Natural killer cell (primary cell): ENCODE measurements at regions of chr19 and their contacts with region 1.

Region 1: DNA sequence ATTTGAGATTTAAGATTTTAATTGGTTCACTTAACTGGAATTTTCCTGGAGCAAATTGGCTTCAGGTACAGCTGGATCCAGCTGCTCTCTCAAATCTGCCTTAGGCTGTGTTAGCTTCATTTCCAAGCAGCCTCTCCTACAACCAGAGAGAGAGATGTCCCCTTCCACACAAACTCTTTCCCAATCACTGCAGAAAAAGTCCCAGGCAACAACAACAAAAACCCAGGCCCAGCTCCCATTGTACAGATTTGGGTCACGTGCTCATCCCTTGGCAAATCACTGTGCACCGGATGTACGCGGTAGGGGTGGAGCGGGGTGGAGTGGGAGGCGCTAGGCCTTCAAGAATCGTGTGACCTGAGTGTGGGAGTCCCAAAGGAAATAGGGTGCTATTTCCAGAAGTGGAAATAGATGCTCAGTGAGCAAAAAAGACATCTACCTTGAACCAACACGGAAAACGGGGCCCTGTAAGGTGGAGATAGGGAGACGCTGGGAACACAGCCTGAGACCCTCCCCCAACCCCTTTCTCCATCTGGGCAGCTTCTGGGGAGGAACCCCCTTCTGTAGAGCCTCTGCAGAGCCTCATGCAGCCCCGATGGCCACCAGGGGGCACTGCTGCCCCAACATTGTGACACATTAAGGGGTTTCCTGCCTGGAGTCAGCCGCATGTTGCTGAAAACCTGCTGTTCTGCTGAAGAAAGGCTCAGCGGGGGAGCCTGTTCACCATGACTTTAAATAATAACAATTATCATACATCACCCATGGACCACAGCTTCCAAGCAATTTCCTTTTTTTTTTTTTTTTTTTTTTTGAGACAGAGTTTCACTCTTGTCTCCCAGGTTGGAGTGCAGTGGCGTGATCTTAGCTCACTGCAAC is 25.4 kb downstream of the HPN start:
- DNase-seq: peak; percentile 89 to 94
- ATAC-seq: peak; percentile 84 to 94 (median 94)
- H3K4me3 ChIP-seq: no peak overlapping the region
- H3K4me3 Mint-ChIP-seq: no peak overlapping the region
- H3K27ac ChIP-seq: no peak overlapping the region
- H3K27ac Mint-ChIP-seq: no peak overlapping the region
- H3K4me1 ChIP-seq: peaks cover 6% of the 10 kb centered on the region
- H3K4me1 Mint-ChIP-seq: peaks cover 0 to 5% of the 10 kb centered on the region in 2 donors
- H3K27me3 ChIP-seq: no peaks in the 10 kb centered on the region
- H3K27me3 Mint-ChIP-seq: peaks cover 0 to 4% of the 10 kb centered on the region in 2 donors
- CTCF ChIP-seq: peak; percentile 91

Region 2: DNA sequence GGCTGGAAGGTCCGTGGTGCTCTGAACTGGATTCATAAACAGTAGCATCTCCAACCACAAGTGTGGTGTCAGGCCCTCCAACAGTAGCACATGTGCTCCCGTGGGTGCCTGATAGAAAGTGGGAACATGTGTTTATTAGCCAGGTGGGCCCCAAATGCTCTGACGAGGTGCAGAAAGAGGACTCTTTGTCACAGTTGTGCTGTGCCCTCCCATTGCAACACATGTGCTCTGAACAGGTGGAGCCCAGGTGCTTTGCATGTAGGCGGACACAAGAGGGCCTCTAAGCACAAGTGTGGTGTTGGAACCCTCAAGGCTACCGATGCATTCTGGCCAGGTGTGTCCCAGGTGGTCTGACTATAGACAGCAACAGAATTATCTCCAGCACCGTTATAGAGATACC is 215.6 kb before region 1 on chr19:
- intact Hi-C with region 1: no loop called
- DNase-seq: peak in 1 of 2 donors; percentile 26
- ATAC-seq: no peak
- H3K4me3 ChIP-seq: no peak overlapping the region
- H3K4me3 Mint-ChIP-seq: no peak overlapping the region
- H3K27ac ChIP-seq: no peak overlapping the region
- H3K27ac Mint-ChIP-seq: no peak overlapping the region
- H3K4me1 ChIP-seq: no peaks in the 10 kb centered on the region
- H3K4me1 Mint-ChIP-seq: peaks cover 35 to 48% of the 10 kb centered on the region in 2 donors
- H3K27me3 ChIP-seq: no peaks in the 10 kb centered on the region
- H3K27me3 Mint-ChIP-seq: no peaks in the 10 kb centered on the region
- CTCF ChIP-seq: no peak

Region 3: GRCh38 chr19:34888091-34888490 is 178.8 kb before region 1 on chr19:
- intact Hi-C with region 1: no loop called
- DNase-seq: no peak
- ATAC-seq: no peak
- H3K4me3 ChIP-seq: no peak overlapping the region
- H3K4me3 Mint-ChIP-seq: no peak overlapping the region
- H3K27ac ChIP-seq: no peak overlapping the region
- H3K27ac Mint-ChIP-seq: no peak overlapping the region
- H3K4me1 ChIP-seq: no peaks in the 10 kb centered on the region
- H3K4me1 Mint-ChIP-seq: no peaks in the 10 kb centered on the region
- H3K27me3 ChIP-seq: no peaks in the 10 kb centered on the region
- H3K27me3 Mint-ChIP-seq: peaks cover 12 to 15% of the 10 kb centered on the region in 2 donors
- CTCF ChIP-seq: no peak

Region 4: DNA sequence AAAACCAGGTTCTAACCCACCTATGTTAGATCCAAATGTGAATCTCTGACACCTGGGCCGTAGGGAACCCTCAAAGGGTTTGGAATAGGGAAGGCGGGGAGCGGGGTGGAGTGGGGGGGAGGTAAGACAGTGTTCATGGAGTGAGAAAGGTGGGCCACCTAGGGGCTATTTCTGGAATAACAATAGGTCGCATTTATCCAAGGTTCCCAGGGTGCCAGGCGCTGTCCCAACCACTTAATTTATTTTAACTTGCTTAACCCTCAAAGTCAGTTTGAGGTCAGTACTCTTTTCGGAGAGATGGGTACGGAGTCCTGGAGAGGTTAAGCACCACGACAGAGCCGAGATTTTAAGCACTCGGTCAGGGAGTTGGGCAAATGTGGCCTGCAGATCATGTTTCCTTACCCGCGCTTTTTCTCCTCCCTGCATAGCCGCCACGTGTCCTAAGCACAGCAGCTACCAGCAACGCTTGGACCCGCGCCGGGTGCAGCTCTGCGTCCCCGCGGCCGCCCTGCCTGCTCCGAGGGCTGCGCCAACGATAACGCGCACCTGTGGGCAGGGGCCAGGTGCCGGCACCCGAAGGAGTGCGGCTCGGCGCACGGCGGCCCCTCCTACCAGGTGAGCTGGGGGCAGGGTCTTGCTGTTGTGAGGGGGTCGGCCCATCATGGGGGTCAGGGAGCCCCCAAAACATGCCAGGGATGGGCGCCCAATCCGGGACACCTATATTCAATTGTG is 23.7 kb after region 1 on chr19:
- intact Hi-C with region 1: loop called (anchors 1 kb)
- DNase-seq: peak in 1 of 2 donors; percentile 73
- ATAC-seq: peak in 2 of 3 donors; percentile 82 to 84
- H3K4me3 ChIP-seq: no peak overlapping the region
- H3K4me3 Mint-ChIP-seq: no peak overlapping the region
- H3K27ac ChIP-seq: no peak overlapping the region
- H3K27ac Mint-ChIP-seq: no peak overlapping the region
- H3K4me1 ChIP-seq: peaks cover 21% of the 10 kb centered on the region
- H3K4me1 Mint-ChIP-seq: peaks cover 13 to 14% of the 10 kb centered on the region in 2 donors
- H3K27me3 ChIP-seq: peaks cover 6% of the 10 kb centered on the region
- H3K27me3 Mint-ChIP-seq: peaks cover 0 to 7% of the 10 kb centered on the region in 2 donors
- CTCF ChIP-seq: peak; percentile 61

Region 5: DNA sequence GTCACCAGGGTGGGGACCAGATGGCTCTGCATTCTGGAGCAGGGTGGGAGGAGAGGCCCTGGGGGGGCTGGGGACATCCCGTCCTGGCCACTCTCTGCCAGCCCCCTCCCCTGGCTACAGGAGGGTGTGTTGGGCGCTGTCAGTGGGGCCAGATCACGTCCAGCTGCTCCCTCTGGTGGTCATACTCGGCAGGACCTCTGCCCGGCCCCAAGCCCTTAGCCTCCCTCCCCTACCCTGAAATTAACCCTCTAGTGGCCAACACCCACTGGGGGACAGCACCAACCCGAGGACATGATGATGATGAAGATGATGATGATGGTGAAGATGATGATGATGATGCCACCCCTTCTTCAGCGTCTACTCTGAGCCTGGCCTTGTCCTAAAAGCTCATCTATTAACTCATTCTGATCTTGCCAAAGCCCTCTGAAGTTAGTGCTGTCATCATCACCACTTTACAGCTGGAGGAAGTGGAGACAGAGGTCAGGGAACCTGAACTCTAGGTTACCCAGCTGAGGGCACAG is 68.5 kb after region 1 on chr19:
- intact Hi-C with region 1: loop called (anchors 1 kb)
- DNase-seq: peak; percentile 64 to 79
- ATAC-seq: peak; percentile 80 to 97 (median 87)
- H3K4me3 ChIP-seq: no peak overlapping the region
- H3K4me3 Mint-ChIP-seq: no peak overlapping the region
- H3K27ac ChIP-seq: no peak overlapping the region
- H3K27ac Mint-ChIP-seq: no peak overlapping the region
- H3K4me1 ChIP-seq: peaks cover 6% of the 10 kb centered on the region
- H3K4me1 Mint-ChIP-seq: peaks cover 0 to 12% of the 10 kb centered on the region in 2 donors
- H3K27me3 ChIP-seq: no peaks in the 10 kb centered on the region
- H3K27me3 Mint-ChIP-seq: peaks cover 0 to 12% of the 10 kb centered on the region in 2 donors
- CTCF ChIP-seq: peak; percentile 69

Region 6: DNA sequence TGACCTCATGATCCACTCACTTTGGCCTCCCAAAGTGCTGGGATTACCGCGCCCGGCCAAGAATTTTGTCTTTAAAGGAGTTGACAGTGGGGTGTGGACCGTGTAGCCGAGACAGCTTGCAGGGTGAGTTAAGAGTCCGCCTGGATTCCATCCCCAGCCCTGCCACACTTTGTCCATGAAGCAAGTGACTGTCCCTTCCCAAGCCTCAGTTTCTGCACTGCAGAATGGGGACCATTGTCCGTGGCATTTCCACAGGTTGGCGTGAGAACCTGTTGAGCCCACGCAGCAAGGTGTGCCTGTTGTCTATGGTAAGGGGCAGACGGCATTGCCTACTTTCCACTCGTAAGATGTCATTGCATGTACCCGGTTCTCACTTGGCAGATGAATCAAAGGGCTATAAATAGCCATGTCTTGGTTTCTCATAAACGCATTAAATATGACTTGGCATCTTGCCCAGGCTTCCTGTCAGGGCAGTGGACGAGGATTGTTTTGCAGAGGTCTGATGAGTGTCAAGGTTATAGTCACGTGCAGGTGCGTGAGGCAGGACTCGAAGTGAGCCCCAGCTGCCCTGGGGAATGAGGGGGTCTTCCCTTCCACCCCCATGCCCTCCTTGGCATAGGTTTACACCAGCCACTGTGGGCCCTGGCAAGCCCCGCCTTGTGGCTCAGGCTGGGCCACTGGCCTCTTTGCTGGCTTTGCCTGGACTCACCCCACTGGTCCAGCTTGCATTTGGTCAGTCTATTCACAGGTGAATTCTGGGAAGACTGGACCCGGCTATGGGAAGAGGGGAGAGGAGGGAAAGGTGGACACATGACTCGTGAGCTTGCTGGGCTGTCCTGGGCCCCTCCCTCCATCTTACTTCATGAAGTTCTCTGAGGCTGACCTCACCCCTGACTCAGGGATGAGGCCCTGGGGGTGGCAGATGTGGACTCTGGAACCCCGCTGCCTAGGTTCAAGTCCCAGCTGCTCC is 147.0 kb after region 1 on chr19:
- intact Hi-C with region 1: loop called (anchors 5 kb)
- DNase-seq: peak; percentile 71 to 97
- ATAC-seq: peak; percentile 46 to 61 (median 55)
- H3K4me3 ChIP-seq: no peak overlapping the region
- H3K4me3 Mint-ChIP-seq: peak overlapping the region; percentile 38
- H3K27ac ChIP-seq: peak overlapping the region; percentile 99
- H3K27ac Mint-ChIP-seq: peak overlapping the region; percentile 95 to 96
- H3K4me1 ChIP-seq: peaks cover 72% of the 10 kb centered on the region
- H3K4me1 Mint-ChIP-seq: peaks cover 55 to 62% of the 10 kb centered on the region in 2 donors
- H3K27me3 ChIP-seq: no peaks in the 10 kb centered on the region
- H3K27me3 Mint-ChIP-seq: no peaks in the 10 kb centered on the region
- CTCF ChIP-seq: no peak

Region 7: DNA sequence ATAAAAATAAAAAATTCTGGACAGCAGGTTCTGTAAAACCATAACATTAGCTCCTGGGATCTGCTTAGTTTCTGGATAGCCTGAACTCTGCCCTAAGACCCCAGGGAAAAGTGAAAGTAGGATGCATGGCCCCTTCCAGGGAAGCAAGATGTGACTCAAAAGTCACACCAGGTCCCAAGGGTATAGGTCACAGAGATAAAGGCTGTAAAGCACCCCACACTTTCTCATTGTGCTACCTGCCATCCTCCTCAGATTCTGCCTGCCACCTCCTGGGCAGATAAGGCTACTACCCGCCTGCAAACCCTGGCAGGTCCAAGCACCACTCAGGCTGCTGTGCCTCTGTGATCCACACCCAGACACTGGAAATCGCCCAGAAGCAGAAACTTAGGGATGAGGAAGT is 401.7 kb after region 1 on chr19:
- intact Hi-C with region 1: loop called (anchors 1 kb)
- DNase-seq: peak; percentile 58 to 84
- ATAC-seq: peak; percentile 96 to 100 (median 100)
- H3K4me3 ChIP-seq: no peak overlapping the region
- H3K4me3 Mint-ChIP-seq: no peak overlapping the region
- H3K27ac ChIP-seq: no peak overlapping the region
- H3K27ac Mint-ChIP-seq: no peak overlapping the region
- H3K4me1 ChIP-seq: peaks cover 10% of the 10 kb centered on the region
- H3K4me1 Mint-ChIP-seq: peaks cover under 1 to 13% of the 10 kb centered on the region in 2 donors
- H3K27me3 ChIP-seq: no peaks in the 10 kb centered on the region
- H3K27me3 Mint-ChIP-seq: no peaks in the 10 kb centered on the region
- CTCF ChIP-seq: peak; percentile 72

Region 8: GRCh38 chr19:35495107-35496064 is 428.5 kb after region 1 on chr19:
- intact Hi-C with region 1: loop called (anchors 1 kb)
- DNase-seq: peak; percentile 55 to 80
- ATAC-seq: peak; percentile 90 to 100 (median 99)
- H3K4me3 ChIP-seq: no peak overlapping the region
- H3K4me3 Mint-ChIP-seq: no peak overlapping the region
- H3K27ac ChIP-seq: no peak overlapping the region
- H3K27ac Mint-ChIP-seq: no peak overlapping the region
- H3K4me1 ChIP-seq: peaks cover 8% of the 10 kb centered on the region
- H3K4me1 Mint-ChIP-seq: peaks cover 0 to 10% of the 10 kb centered on the region in 2 donors
- H3K27me3 ChIP-seq: no peaks in the 10 kb centered on the region
- H3K27me3 Mint-ChIP-seq: peaks cover 0 to 14% of the 10 kb centered on the region in 2 donors
- CTCF ChIP-seq: peak; percentile 97